ENCODE measurements at regions of chr2 and their contacts with region 1.

Region 1: DNA sequence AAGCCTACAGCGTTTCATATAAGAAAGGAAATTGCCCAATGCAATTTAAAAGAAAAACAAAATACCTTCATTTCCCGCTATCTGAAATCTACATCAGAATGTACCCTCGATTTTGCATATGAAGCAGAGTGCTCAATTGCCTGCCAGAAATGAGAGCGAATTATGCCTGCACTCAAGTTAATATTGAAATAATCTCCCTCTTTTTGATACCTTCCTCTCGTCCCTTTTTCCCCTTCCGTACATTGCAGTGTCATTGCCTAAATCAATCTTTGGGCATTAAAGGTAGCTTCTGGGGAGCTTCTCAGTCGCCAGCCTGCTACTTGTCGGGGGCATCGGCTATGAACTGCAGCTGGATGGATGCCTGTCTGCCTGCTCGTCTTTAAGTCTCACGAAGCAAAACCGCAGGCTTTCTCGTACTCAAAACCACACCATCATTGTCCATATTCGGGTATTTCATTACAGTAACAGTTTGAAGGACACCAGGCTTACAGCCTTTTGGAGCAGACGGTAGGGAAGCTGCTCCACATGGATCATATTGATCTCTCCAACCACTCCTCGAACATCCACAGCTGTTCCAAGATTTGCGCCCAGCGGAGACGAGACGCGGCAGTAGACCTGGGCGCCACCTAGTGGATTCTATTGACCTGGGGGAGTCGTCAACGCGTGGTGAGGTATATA is 64.0 kb upstream of the HNRNPA3 start:
- DNase-seq: peak; percentile 88
- ATAC-seq: peak; percentile 97
- H3K4me3 Mint-ChIP-seq: peak overlapping the region; percentile 79
- H3K27ac Mint-ChIP-seq: no peak overlapping the region; the same call in 1 of the 2 replicates
- H3K4me1 Mint-ChIP-seq: peaks cover 31% of the 10 kb centered on the region
- H3K27me3 Mint-ChIP-seq: peaks cover 9% of the 10 kb centered on the region; the same call in 1 of the 2 replicates
- CTCF ChIP-seq: peak; percentile 81

Region 2: GRCh38 chr2:176126929-176127773 is 1021.5 kb before region 1 on chr2:
- CTCF ChIA-PET with region 1: interaction called, 21 read pairs
- POLR2A ChIA-PET with region 1: no interaction called
- DNase-seq: peak; percentile 69
- ATAC-seq: no peak
- H3K4me3 Mint-ChIP-seq: no peak overlapping the region
- H3K27ac Mint-ChIP-seq: no peak overlapping the region
- H3K4me1 Mint-ChIP-seq: peaks cover 23% of the 10 kb centered on the region
- H3K27me3 Mint-ChIP-seq: peaks cover 98% of the 10 kb centered on the region
- CTCF ChIP-seq: peak; percentile 82

Region 3: DNA sequence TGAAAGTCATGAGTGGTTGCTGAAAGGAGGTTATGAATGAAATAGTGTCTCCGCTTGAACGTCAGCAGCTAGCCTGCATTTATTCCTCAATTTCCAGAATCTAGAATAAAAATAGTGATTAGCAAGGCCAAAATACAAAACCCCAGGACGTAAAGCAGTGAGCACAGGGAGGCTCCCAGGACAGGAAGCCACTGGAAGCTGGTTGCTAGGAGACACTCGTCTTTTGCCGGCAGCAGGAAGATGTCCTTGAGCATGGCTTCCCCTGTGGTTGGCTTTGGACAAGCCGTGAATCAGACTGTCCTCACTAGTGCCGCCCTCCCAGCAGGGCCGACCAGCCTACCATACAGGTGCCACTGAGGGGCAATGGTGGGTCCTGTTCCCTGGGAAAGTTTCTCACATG is 505.0 kb before region 1 on chr2:
- CTCF ChIA-PET with region 1: interaction called, 12 read pairs
- POLR2A ChIA-PET with region 1: no interaction called
- DNase-seq: peak; percentile 22
- ATAC-seq: peak; percentile 68
- H3K4me3 Mint-ChIP-seq: no peak overlapping the region
- H3K27ac Mint-ChIP-seq: no peak overlapping the region
- H3K4me1 Mint-ChIP-seq: peaks cover 44% of the 10 kb centered on the region
- H3K27me3 Mint-ChIP-seq: peaks cover 95% of the 10 kb centered on the region
- CTCF ChIP-seq: no peak

Region 4: DNA sequence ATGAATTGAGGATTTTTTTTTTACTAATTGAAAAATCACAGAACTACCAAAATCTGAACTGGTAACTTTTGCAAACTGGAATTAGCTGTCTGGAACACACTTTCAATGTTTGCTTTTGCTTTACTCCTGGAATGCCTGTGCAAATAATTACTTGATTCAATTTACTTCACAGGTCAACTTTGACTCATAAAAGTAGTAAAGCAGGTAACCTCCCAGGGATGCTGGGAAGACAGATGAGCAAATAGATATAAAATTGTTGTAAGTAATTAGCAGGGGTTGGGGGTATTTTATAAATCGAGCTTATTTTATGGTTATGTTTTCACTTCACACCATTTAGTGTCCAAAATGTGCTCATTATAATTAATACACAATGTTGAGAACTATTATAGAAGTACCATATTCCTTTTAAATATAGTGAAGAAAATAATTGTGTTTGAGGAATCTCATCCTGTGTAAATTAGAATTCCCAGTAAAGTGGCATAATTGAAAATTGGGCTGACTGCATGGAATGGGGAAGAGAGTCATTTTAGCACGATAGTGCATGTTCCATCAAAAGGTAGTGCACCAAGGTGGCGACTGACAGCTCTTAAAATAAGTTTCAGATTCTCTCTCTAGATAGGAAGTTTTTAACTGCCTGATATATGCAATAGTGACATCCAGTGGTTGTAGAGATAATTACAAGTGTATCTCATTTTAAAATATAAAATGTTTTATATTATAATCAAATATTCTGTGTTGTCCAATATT is 334.1 kb before region 1 on chr2:
- CTCF ChIA-PET with region 1: interaction called, 30 read pairs
- POLR2A ChIA-PET with region 1: interaction called, 4 read pairs
- DNase-seq: no peak
- ATAC-seq: no peak
- H3K4me3 Mint-ChIP-seq: no peak overlapping the region
- H3K27ac Mint-ChIP-seq: no peak overlapping the region
- H3K4me1 Mint-ChIP-seq: peaks cover 57% of the 10 kb centered on the region
- H3K27me3 Mint-ChIP-seq: no peaks in the 10 kb centered on the region; the same call in 1 of the 2 replicates
- CTCF ChIP-seq: peak; percentile 44; the same call in 1 of the 2 replicates

Region 5: GRCh38 chr2:177106212-177106611 is 42.4 kb before region 1 on chr2:
- CTCF ChIA-PET with region 1: interaction called, 14 read pairs
- POLR2A ChIA-PET with region 1: no interaction called
- DNase-seq: no peak
- ATAC-seq: peak; percentile 99
- H3K4me3 Mint-ChIP-seq: no peak overlapping the region
- H3K27ac Mint-ChIP-seq: no peak overlapping the region
- H3K4me1 Mint-ChIP-seq: no peaks in the 10 kb centered on the region
- H3K27me3 Mint-ChIP-seq: no peaks in the 10 kb centered on the region
- CTCF ChIP-seq: no peak

Region 6: DNA sequence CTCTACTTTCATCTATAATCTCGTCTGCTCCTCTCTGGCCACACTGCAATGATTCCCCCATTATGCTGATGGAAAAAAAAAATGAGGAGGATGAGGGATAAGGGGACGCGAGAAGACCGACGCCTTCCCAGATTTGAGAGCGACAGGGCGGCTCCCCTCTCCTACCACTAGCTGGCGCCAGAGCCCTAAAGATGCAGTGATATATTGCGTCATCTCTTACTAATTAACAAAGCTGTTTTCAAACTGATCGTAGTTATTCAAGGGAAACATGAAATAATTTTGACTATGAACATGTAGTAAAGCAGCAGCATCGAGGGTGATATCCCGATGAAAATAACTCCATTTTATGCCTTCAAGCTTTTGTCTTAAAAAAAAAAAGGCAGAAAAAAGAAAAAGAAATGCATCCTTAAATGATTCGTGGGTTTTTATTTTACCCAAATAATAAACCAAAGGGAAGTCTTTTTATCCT is 16.0 kb after region 1 on chr2:
- CTCF ChIA-PET with region 1: interaction called, 44 read pairs
- POLR2A ChIA-PET with region 1: no interaction called
- DNase-seq: peak; percentile 85
- ATAC-seq: peak; percentile 83
- H3K4me3 Mint-ChIP-seq: no peak overlapping the region
- H3K27ac Mint-ChIP-seq: no peak overlapping the region
- H3K4me1 Mint-ChIP-seq: peaks cover 19% of the 10 kb centered on the region
- H3K27me3 Mint-ChIP-seq: no peaks in the 10 kb centered on the region
- CTCF ChIP-seq: peak; percentile 92

Measured in WTC11 (cell line).